ENCODE measurements at regions of chr12 and their contacts with region 1.

Region 1: GRCh38 chr12:109428037-109428629 is 49.0 kb downstream of the KCTD10 start:
- DNase-seq: peak; percentile 79
- ATAC-seq: peak; percentile 98
- H3K4me3 ChIP-seq: no peak overlapping the region
- H3K27ac ChIP-seq: no peak overlapping the region
- H3K4me1 ChIP-seq: no peaks in the 10 kb centered on the region
- H3K27me3 ChIP-seq: peaks cover 13% of the 10 kb centered on the region; the same call in 1 of the 2 replicates
- CTCF ChIP-seq: peak; percentile 96
- POLR2A ChIP-seq: no peak
- RAD21 ChIP-seq: peak; percentile 87

Region 2: DNA sequence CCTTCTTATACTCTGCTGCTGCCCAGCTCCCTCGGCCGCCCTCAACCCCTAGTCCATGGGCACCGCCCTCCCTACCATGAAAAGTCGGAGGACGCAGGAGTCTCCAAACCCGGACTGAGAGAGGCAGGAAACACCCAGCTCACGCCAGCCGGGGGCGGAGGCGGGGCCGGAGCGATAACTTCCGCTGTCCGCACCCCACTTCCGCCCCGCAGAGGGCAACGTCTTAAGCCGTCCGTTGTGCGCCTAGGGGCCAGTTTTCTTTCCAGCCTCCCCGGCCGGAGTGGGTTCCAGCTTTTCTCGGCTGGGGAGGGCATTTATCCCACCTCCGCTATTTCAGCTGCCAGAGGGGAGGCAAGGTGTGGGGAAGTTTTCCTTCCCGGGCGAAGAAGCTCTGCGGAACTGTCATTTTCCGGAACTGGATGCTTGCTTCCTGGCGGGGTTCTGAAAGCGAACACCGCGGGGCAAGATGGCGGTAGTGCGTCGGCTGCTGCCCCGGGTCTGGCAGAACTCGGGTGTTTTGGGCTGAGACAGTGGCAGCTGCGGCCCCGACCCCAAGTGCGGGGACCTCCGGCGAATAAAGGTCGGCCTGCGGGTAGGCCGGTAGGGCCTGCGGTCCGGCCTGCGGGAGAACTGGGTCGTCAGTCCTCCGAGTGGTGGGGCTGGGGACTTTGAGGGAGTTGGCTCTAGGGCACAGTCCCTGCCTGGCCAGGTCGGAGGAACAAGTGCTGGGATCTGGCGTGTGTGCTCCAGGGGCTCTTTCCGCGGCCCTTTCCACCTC is 49.2 kb after region 1 on chr12 and contains the starts of genes KCTD10 and UBE3B:
- CTCF ChIA-PET with region 1: interaction called, 8 read pairs
- POLR2A ChIA-PET with region 1: no interaction called
- dilution Hi-C with region 1: no loop called
- in situ Hi-C with region 1: loop called (anchors 5 kb)
- intact Hi-C with region 1: loop called (anchors 1 kb)
- DNase-seq: peak; percentile 89
- ATAC-seq: peak; percentile 91
- H3K4me3 ChIP-seq: peak within 1 kb of the TSS; percentile 90
- H3K27ac ChIP-seq: peak within 1 kb of the TSS; percentile 98
- H3K4me1 ChIP-seq: peaks cover 8% of the 10 kb centered on the region
- H3K27me3 ChIP-seq: no peaks in the 10 kb centered on the region
- CTCF ChIP-seq: no peak
- POLR2A ChIP-seq: peak; percentile 88
- RAD21 ChIP-seq: peak; percentile 29; the same call in 1 of the 2 replicates
- total RNA-seq, gene KCTD10: 72.1 and 77.2 TPM in 2 replicates
- total RNA-seq, gene UBE3B: 18.8 and 19.4 TPM in 2 replicates

Region 3: DNA sequence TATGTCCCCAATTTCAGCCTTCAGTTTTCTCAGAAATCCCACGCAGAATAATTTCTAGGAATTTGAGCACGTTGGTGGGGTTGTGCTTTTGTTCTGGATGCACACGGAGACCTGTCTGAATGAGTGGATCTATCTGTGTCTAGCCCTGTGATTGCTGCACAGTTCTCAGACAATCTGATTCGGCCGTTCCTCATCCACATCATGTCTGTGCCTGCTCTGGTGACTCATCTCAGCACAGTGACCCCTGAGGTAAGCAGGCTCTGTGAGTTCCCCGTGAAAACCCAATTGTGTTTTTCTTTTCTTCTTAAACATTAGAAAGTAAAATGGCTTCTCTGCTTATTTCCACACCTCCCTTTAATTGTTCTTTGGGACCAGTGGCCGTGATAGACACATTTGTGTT is 69.5 kb after region 1 on chr12:
- CTCF ChIA-PET with region 1: interaction called, 3 read pairs
- POLR2A ChIA-PET with region 1: no interaction called
- dilution Hi-C with region 1: no loop called
- in situ Hi-C with region 1: no loop called
- intact Hi-C with region 1: loop called (anchors 5 kb)
- DNase-seq: peak; percentile 79
- ATAC-seq: peak; percentile 67
- H3K4me3 ChIP-seq: no peak overlapping the region
- H3K27ac ChIP-seq: no peak overlapping the region
- H3K4me1 ChIP-seq: no peaks in the 10 kb centered on the region
- H3K27me3 ChIP-seq: no peaks in the 10 kb centered on the region
- CTCF ChIP-seq: no peak
- POLR2A ChIP-seq: no peak
- RAD21 ChIP-seq: no peak

Region 4: DNA sequence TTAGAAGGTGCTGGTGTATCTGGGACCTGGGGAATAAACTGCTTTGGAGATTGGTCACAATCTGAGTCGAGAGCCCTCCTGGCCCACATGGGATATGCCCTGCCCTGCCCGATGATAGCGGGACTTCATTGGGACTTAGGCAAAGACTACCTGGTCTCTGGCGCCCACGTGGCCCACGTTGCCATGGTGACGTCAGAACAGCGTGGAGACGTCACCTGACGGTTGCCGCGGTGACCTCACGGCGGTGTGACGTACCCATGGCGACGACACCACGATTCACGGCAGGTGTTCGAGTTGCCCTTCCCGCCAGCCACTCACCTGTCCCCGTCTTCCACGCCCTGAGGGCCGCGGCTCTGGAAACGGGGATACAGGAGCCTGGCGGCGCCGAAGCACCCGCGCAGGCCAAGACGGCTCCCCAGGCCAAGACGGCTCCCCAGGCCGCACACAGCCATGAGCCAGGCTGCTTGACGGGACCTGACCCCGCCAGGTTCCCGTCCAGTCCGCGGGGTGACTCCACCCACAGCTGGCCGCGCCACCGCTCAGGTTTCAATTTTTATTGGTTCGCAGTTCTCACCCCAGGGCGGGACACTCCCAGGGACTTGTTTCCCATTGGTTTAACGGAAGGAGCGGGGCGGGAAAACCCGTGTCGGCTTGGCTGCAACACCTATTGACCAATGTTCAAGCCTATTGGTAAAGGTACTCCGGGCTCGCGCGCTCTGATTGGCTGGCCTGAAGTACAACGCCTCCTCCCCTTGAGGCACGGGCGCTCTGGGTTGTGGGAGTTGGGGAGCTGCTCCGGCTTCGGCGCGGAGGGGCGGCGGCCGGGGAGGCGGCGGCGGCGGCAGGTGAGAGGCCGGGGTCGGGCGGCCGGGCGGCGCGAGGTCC is 145.1 kb after region 1 on chr12 and contains the starts of genes MMAB and MVK:
- CTCF ChIA-PET with region 1: no interaction called
- POLR2A ChIA-PET with region 1: no interaction called
- dilution Hi-C with region 1: no loop called
- in situ Hi-C with region 1: no loop called
- intact Hi-C with region 1: loop called (anchors 1 kb)
- DNase-seq: peak; percentile 99
- ATAC-seq: peak; percentile 98
- H3K4me3 ChIP-seq: peak within 1 kb of the TSS; percentile 73
- H3K27ac ChIP-seq: peak within 1 kb of the TSS; percentile 44
- H3K4me1 ChIP-seq: peaks cover 2% of the 10 kb centered on the region; the same call in 1 of the 2 replicates
- H3K27me3 ChIP-seq: no peaks in the 10 kb centered on the region
- CTCF ChIP-seq: no peak
- POLR2A ChIP-seq: peak; percentile 49; the same call in 1 of the 2 replicates
- RAD21 ChIP-seq: no peak
- total RNA-seq, gene MMAB: 14.2 and 16.5 TPM in 2 replicates
- total RNA-seq, gene MVK: 6.6 and 6.9 TPM in 2 replicates

Measured in IMR-90 (cell line).